Activated CD4-positive, alpha-beta T cell treated with anti-CD3 and anti-CD28 coated beads for 36 hours (primary cell): ENCODE measurements at regions of chr2 and their contacts with region 1.

Region 1: DNA sequence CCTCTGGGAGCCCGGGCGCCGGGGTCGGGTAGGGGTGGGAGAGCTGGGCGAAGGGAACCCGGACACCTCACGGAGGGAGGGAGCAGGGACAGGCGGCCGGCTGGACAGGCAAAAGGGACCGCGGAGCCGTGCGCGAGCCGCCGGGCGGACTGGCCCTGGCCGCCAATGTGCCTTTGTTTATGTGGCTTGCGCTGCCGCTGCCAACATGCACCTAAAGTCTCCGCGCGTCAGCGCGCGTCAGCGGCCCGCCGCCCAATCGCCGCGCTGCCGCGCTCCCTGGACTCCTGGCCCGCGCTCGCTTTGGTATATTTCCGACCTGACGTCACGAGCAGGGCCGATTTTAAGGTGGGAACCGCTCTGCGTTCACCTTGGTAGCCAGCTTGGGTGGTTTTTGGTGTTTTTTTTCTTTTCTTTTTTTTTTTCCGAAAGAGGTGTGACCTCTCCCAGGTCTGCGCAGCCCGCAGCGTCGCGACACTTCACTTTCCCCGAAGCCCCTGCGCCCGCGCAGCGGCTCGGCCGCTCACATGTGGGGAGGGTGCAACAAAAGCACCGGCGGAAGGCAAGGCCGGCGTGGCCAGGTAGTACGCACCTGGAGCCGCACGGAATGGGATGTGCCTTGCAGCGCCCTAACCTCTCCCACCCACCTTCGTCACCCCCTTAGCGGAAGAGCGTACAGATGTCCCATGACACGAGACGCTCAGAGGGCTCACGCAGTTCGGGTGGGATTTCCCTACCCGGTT is at the start of gene NR4A2:
- DNase-seq: peak; percentile 95
- ATAC-seq: peak; percentile 63
- H3K4me3 Mint-ChIP-seq: peak within 1 kb of the TSS; percentile 85
- H3K27ac Mint-ChIP-seq: peak within 1 kb of the TSS; percentile 94
- H3K4me1 Mint-ChIP-seq: peaks cover 46% of the 10 kb centered on the region
- H3K27me3 Mint-ChIP-seq: peaks cover 8% of the 10 kb centered on the region
- total RNA-seq, gene NR4A2: 19.1 to 23.0 TPM

Region 2: DNA sequence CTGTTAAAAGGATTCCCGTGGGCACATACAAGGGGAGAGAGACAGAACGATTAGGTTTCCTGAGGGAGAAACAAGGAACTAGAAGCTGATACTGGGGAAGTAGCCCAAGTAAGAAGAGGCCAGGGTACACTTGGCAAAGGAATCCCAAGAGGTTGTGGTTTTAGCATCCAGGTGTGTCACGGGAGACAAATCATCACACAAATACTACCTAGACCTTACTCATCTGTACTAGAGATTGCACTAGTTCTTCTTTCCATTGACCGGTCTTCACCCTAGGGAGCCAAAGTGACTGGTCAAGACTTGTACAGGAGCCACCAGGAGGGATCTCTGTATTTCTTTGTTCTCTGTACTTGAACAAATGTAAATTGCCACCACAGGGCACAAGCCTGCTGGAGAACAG is 14.0 kb after region 1 on chr2:
- CTCF ChIA-PET with region 1: interaction called, 12 read pairs
- POLR2A ChIA-PET with region 1: interaction called, 35 read pairs
- intact Hi-C with region 1: loop called (anchors 1 kb)
- DNase-seq: no peak
- ATAC-seq: no peak
- H3K4me3 Mint-ChIP-seq: no peak overlapping the region
- H3K27ac Mint-ChIP-seq: peak overlapping the region; percentile 19
- H3K4me1 Mint-ChIP-seq: peaks cover 29% of the 10 kb centered on the region
- H3K27me3 Mint-ChIP-seq: no peaks in the 10 kb centered on the region

Region 3: GRCh38 chr2:156435715-156436496 is 103.2 kb after region 1 on chr2 and contains the start of gene GPD2:
- CTCF ChIA-PET with region 1: interaction called, 7 read pairs
- POLR2A ChIA-PET with region 1: interaction called, 4 read pairs
- intact Hi-C with region 1: loop called in 1 of 2 experiments (anchors 1 kb)
- DNase-seq: peak; percentile 72
- ATAC-seq: peak; percentile 74
- H3K4me3 Mint-ChIP-seq: peak within 1 kb of the TSS; percentile 87
- H3K27ac Mint-ChIP-seq: peak within 1 kb of the TSS; percentile 96
- H3K4me1 Mint-ChIP-seq: peaks cover 25% of the 10 kb centered on the region
- H3K27me3 Mint-ChIP-seq: no peaks in the 10 kb centered on the region
- total RNA-seq, gene GPD2: 31.6 to 32.6 TPM

Region 4: GRCh38 chr2:157194097-157194688 is 861.5 kb after region 1 on chr2:
- CTCF ChIA-PET with region 1: no interaction called
- POLR2A ChIA-PET with region 1: no interaction called
- intact Hi-C with region 1: loop called in 1 of 2 experiments (anchors 10 kb)
- DNase-seq: peak; percentile 21
- ATAC-seq: peak; percentile 63
- H3K4me3 Mint-ChIP-seq: no peak overlapping the region
- H3K27ac Mint-ChIP-seq: no peak overlapping the region
- H3K4me1 Mint-ChIP-seq: no peaks in the 10 kb centered on the region
- H3K27me3 Mint-ChIP-seq: peaks cover 2% of the 10 kb centered on the region

Region 5: DNA sequence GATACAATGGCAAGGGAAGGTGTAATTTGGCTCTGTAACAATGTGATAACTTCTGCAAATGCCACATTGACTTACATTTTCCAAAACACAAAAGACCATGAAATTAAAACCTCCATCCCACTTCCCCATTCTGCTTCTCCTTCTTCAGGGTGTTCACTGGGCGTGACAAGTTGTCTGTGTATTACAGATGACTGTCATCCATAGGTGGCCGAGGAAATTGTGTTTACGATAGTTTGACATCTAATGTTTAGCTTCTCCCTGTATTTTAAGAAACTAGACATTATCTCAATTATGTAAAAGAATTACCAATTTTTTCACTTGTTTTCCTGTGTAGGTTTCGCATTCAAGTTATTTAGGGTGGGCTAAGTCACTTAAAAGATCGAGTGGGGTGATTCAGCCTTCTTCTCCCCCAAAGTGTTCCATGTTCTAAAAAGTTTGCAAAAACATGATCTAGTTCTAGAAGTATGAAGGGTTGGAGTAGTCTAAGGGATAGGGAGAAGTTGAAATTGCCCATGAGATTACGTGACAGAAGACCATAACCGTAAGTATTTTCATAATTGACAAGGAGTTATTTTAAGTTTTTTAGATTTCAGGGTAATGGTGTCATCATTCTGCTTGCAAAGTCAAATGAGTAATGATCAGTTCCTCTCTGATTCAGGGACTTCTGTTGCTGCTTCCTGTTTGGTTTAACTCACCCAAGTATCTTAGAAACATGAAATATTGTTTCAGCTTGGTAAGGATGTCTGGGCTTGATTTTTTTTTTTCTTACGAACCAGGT is 1136.4 kb after region 1 on chr2:
- CTCF ChIA-PET with region 1: no interaction called
- POLR2A ChIA-PET with region 1: no interaction called
- intact Hi-C with region 1: loop called in 1 of 2 experiments (anchors 10 kb)
- DNase-seq: no peak
- ATAC-seq: peak; percentile 67
- H3K4me3 Mint-ChIP-seq: peak overlapping the region; percentile 68
- H3K27ac Mint-ChIP-seq: peak overlapping the region; percentile 94
- H3K4me1 Mint-ChIP-seq: peaks cover 95% of the 10 kb centered on the region
- H3K27me3 Mint-ChIP-seq: no peaks in the 10 kb centered on the region